Activated CD4-positive, alpha-beta T cell treated with anti-CD3 and anti-CD28 coated beads, Interleukin-2, amount 10 ng/mL, durations not matched to agents 24 days and 14 days (primary cell): ENCODE measurements at regions of chr7 and their contacts with region 1.

Region 1: DNA sequence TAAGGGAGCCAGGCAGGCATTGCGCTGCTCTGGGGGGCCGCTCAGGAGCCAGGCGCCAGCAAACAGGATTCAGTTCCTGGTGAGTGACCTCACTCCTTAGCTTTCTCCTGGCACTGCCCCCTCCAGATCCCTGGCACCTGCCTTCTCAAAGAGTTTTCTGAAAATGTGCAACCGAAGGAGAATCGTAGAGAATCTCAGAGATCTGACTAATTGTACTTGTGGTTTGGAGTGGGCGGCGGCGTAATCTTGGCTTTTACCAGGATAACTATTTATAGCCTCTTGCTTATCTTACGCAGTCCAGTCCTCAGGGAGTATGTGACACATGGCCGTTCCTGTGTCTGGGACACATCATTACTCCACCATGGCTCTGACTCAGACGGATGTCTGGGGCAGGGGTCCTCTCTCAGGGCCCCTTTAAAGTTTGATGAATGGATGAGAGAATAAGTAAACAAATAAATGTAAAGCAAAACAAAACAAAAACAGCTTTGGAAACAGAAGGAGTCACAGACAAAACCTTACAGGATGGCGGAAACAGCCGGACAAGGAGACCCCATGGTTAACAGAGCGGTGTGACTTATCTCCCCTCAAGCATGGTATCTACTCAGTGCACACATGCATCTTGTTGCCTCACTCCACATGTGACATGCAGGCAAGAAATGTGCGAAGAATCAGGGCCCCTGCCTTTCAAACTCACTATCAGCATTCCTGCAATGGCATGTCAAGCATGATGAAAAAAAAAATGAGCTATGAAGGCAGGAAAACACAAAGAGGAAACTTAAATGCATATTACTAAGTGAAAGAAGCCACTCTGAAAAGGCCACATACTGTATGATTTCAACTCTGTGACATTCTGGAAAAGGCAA is 99.7 kb downstream of the TNS3 start:
- DNase-seq: no peak
- H3K4me3 Mint-ChIP-seq: peak overlapping the region; percentile 58
- H3K27ac Mint-ChIP-seq: peak overlapping the region; percentile 86
- H3K4me1 Mint-ChIP-seq: peaks cover 33% of the 10 kb centered on the region
- H3K27me3 Mint-ChIP-seq: no peaks in the 10 kb centered on the region

Region 2: GRCh38 chr7:47291461-47292081 is 190.7 kb before region 1 on chr7:
- intact Hi-C with region 1: loop called (anchors 2 kb)
- DNase-seq: peak; percentile 65
- H3K4me3 Mint-ChIP-seq: peak overlapping the region; percentile 36
- H3K27ac Mint-ChIP-seq: peak overlapping the region; percentile 86
- H3K4me1 Mint-ChIP-seq: peaks cover 17% of the 10 kb centered on the region
- H3K27me3 Mint-ChIP-seq: no peaks in the 10 kb centered on the region

Region 3: GRCh38 chr7:47361746-47362215 is 120.5 kb before region 1 on chr7:
- intact Hi-C with region 1: loop called (anchors 5 kb)
- DNase-seq: peak; percentile 54
- H3K4me3 Mint-ChIP-seq: no peak overlapping the region
- H3K27ac Mint-ChIP-seq: peak overlapping the region; percentile 61
- H3K4me1 Mint-ChIP-seq: peaks cover 6% of the 10 kb centered on the region
- H3K27me3 Mint-ChIP-seq: no peaks in the 10 kb centered on the region

Region 4: DNA sequence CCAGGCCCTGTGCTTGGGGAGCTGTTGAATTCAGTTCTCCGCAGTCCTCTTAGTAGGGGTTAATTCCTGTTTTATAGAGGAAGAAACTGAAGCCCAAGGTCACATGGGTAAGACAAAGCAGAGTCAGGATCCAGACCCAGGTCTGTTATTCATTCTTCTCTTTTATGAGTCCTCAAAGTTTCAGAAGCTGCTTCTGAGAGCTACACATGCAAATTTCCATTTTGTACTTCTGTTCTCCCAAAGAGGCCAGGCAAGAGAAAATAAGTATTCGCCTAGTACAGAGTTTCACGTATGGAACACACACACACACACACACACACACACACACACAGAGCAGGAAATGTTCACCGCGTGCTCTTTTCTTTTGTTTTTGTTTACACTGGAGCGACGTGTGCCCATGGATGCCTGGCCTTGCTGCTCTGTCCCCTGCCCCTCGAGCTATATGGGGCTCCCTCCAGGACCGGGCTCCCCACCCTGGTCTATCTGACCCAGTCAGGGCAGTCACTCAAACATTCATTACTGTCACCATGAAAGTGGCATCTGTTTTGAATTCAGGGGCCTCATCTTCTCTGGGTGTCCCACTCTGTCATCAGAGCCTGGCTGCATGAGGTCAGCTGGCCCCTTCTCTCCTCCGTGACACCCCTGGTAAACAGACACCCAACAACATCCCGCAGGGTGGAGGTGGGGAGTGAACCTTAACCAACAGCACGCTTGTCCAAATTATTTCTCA is 15.3 kb after region 1 on chr7:
- intact Hi-C with region 1: loop called (anchors 1 kb)
- DNase-seq: no peak
- H3K4me3 Mint-ChIP-seq: no peak overlapping the region
- H3K27ac Mint-ChIP-seq: no peak overlapping the region
- H3K4me1 Mint-ChIP-seq: no peaks in the 10 kb centered on the region
- H3K27me3 Mint-ChIP-seq: peaks cover 4% of the 10 kb centered on the region

Region 5: DNA sequence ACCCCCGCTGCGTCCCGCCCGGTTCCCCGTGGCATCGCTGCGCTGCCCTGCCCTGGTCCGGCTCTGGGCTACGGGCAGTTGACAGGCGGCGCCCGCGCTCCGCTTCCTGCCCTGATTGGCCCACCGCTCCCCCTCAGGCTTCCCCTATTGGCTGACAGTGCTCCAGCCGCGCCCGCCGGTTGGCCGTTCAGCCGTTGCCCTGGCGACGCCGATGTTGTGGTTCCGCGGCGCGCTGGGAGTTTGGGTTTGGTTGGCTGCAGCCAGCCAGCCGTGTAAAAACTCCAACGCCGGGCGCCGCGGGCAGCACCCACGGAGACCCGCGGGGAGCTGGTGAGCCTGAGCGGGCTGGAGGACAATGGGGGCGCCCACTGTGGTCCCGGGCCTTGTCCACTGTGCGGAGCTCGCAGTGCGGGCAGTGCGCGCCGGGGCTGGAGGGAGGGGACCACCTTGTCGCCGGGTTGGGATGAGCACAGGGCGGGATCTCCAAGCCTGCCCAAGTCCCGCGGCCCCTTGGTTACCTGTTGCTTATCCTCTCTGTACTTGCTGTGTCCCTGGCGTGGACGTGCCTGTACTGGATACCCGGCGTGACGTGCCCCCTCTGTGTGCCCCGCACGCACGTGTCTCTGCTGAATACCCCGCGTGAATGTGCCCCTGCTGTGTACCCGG is 553.2 kb after region 1 on chr7 and contains the start of gene C7orf57:
- intact Hi-C with region 1: loop called (anchors 5 kb)
- DNase-seq: peak; percentile 97
- H3K4me3 Mint-ChIP-seq: peak within 1 kb of the TSS; percentile 84
- H3K27ac Mint-ChIP-seq: peak within 1 kb of the TSS; percentile 74
- H3K4me1 Mint-ChIP-seq: peaks cover 11% of the 10 kb centered on the region
- H3K27me3 Mint-ChIP-seq: peaks cover 64% of the 10 kb centered on the region
- total RNA-seq, gene C7orf57: 0.14 TPM in 2 replicates